Heart left ventricle (tissue), 16 donors: ENCODE measurements at regions of chr2 and their contacts with region 1.

Region 1: GRCh38 chr2:46296840-46297545 is at the start of gene EPAS1:
- DNase-seq: peak; percentile 97 to 98 (median 98)
- ATAC-seq: peak; percentile 80 to 92 (median 85)
- H3K4me3 ChIP-seq: peak within 1 kb of the TSS; percentile 76 to 99 (median 92)
- H3K27ac ChIP-seq: peak within 1 kb of the TSS; percentile 92 to 100 (median 96)
- H3K4me1 ChIP-seq: peaks cover 0 to 42% (median 18%) of the 10 kb centered on the region in 12 donors
- H3K27me3 ChIP-seq: peaks cover 0 to 13% (median 0%) of the 10 kb centered on the region in 9 donors
- CTCF ChIP-seq: no peak
- POLR2A ChIP-seq: peak; percentile 61 to 98
- total RNA-seq, gene EPAS1: 194 to 790 (median 216) TPM

Region 2: DNA sequence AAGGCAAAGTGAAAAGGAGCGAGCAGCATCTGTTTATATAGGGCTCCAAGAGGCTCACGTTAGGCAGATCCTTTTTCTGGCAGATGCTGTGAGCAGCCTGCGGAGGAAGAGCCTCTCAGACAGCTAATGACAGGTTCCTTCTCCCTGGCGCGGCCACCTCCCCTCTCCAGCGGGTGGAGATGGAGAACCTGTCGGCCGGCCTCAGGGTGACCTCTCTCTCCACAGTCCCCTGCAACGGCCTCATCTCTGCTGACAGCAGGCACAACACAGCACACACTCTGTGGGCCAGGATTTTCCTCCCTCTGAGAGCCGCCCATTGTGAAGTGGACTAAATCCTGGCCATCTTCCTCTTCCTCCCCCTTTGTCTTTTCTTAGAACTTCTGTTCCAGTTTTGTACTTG is 525.7 kb before region 1 on chr2:
- intact Hi-C with region 1: no loop called
- DNase-seq: peak; percentile 76 to 87 (median 81)
- ATAC-seq: peak; percentile 93 to 94 (median 94)
- H3K4me3 ChIP-seq: peak overlapping the region in 8 of 12 donors; percentile 20 to 43 (median 34)
- H3K27ac ChIP-seq: peak overlapping the region; percentile 55 to 81 (median 76)
- H3K4me1 ChIP-seq: peaks cover 0 to 73% (median 31%) of the 10 kb centered on the region in 12 donors
- H3K27me3 ChIP-seq: no peaks in the 10 kb centered on the region
- CTCF ChIP-seq: peak in 2 of 12 donors; percentile 10 to 12
- POLR2A ChIP-seq: no peak

Region 3: GRCh38 chr2:46010925-46011490 is 286.0 kb before region 1 on chr2:
- intact Hi-C with region 1: loop called in 6 of 10 experiments (anchors 2 to 10 kb)
- DNase-seq: no peak
- ATAC-seq: peak in 3 of 4 donors; percentile 50 to 68 (median 54)
- H3K4me3 ChIP-seq: no peak overlapping the region
- H3K27ac ChIP-seq: no peak overlapping the region
- H3K4me1 ChIP-seq: peaks cover 0 to 27% (median 12%) of the 10 kb centered on the region in 12 donors
- H3K27me3 ChIP-seq: no peaks in the 10 kb centered on the region
- CTCF ChIP-seq: peak; percentile 44 to 81 (median 72)
- POLR2A ChIP-seq: no peak

Region 4: GRCh38 chr2:46082521-46083485 is 214.2 kb before region 1 on chr2:
- intact Hi-C with region 1: no loop called
- DNase-seq: peak; percentile 75 to 89 (median 79)
- ATAC-seq: peak in 3 of 4 donors; percentile 77 to 94 (median 91)
- H3K4me3 ChIP-seq: no peak overlapping the region
- H3K27ac ChIP-seq: peak overlapping the region in 8 of 12 donors; percentile 23 to 89 (median 56)
- H3K4me1 ChIP-seq: peaks cover 0 to 44% (median 2%) of the 10 kb centered on the region in 12 donors
- H3K27me3 ChIP-seq: no peaks in the 10 kb centered on the region
- CTCF ChIP-seq: no peak
- POLR2A ChIP-seq: no peak

Region 5: GRCh38 chr2:46097714-46098480 is 199.1 kb before region 1 on chr2:
- intact Hi-C with region 1: loop called in 1 of 10 experiments (anchors 10 kb)
- DNase-seq: peak in 4 of 5 donors; percentile 65 to 89 (median 78)
- ATAC-seq: peak; percentile 86 to 96 (median 92)
- H3K4me3 ChIP-seq: no peak overlapping the region
- H3K27ac ChIP-seq: peak overlapping the region; percentile 13 to 88 (median 80)
- H3K4me1 ChIP-seq: peaks cover 0 to 42% (median 19%) of the 10 kb centered on the region in 12 donors
- H3K27me3 ChIP-seq: no peaks in the 10 kb centered on the region
- CTCF ChIP-seq: no peak
- POLR2A ChIP-seq: no peak

Region 6: DNA sequence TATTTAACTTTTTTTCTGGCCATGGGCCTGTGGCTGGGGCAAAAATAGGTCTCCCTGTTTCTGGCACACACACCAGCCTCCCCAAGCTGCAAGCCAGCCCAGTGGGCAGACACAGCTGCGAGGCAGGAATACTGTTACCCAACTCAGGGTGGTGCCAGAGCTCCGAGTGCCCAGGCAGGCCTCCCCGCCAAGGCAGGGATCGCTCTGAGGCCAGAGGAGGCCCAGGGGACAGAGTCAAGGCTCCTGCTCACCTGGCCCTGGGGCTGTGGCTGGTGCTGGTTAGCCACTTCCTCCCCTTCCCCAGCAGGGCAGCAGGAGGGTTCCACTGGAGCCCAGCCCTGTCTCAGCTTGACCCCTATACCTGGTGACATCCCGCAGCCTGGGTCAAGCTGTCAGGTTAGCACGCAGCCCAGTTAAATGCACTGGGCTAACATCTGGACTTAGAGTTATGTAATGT is 66.8 kb before region 1 on chr2:
- intact Hi-C with region 1: loop called in 2 of 10 experiments (anchors 5 kb)
- DNase-seq: peak in 4 of 5 donors; percentile 35 to 69 (median 61)
- ATAC-seq: peak; percentile 62 to 92 (median 88)
- H3K4me3 ChIP-seq: no peak overlapping the region
- H3K27ac ChIP-seq: peak overlapping the region in 8 of 12 donors; percentile 3 to 67 (median 42)
- H3K4me1 ChIP-seq: peaks cover 0 to 32% (median 14%) of the 10 kb centered on the region in 12 donors
- H3K27me3 ChIP-seq: no peaks in the 10 kb centered on the region
- CTCF ChIP-seq: peak; percentile 16 to 56 (median 39)
- POLR2A ChIP-seq: no peak

Region 7: DNA sequence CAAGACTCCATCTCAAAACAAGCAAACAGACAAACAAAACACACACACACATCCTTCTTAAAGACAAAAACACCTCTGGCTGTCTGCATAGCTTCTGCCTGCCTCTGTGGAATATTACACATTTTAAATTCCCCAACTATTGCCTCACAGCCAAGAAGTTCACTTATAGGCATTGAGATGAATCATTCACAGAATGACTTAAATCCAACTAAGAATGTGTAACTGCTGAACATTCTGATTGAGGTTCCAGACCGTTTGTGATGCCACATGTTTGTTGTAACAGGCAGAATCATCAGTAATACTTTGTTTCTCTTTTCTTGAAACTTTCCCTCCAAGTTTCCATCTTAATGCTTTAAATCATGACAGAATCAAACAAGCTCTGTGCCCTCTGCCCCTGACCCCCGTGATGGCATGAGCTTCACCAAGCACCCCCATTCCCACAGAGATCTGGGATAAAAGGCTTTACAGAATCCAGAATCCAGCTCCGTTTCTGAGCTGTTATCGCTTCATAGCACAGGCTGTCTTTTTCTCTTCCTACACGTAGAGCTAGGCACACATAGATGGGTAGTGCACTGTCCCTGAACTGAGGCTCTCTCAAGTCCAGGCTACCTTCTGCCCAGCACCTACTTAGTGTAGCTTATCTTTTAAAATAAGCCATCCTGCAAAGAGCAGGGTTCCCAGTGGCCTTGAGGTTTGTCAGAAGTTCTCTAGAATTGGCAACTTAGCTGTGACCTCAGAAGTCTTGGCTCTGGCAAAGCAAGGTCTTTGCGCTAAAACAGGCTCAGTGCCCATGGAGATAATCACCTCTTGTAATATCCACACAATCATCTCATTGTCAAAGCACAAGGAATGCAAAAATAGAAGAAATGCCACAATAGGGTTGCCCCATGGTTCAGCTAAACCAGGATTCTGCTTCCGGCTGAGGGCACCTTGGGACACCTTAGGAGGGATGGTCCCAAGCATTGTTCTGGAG is 33.1 kb after region 1 on chr2:
- intact Hi-C with region 1: loop called in 5 of 10 experiments (anchors 5 kb)
- DNase-seq: no peak
- ATAC-seq: peak in 1 of 4 donors; percentile 14
- H3K4me3 ChIP-seq: peak overlapping the region in 2 of 12 donors; percentile 9 to 11
- H3K27ac ChIP-seq: peak overlapping the region in 11 of 12 donors; percentile 39 to 90 (median 69)
- H3K4me1 ChIP-seq: peaks cover 31 to 100% (median 97%) of the 10 kb centered on the region in 12 donors
- H3K27me3 ChIP-seq: no peaks in the 10 kb centered on the region
- CTCF ChIP-seq: no peak
- POLR2A ChIP-seq: no peak

Region 8: DNA sequence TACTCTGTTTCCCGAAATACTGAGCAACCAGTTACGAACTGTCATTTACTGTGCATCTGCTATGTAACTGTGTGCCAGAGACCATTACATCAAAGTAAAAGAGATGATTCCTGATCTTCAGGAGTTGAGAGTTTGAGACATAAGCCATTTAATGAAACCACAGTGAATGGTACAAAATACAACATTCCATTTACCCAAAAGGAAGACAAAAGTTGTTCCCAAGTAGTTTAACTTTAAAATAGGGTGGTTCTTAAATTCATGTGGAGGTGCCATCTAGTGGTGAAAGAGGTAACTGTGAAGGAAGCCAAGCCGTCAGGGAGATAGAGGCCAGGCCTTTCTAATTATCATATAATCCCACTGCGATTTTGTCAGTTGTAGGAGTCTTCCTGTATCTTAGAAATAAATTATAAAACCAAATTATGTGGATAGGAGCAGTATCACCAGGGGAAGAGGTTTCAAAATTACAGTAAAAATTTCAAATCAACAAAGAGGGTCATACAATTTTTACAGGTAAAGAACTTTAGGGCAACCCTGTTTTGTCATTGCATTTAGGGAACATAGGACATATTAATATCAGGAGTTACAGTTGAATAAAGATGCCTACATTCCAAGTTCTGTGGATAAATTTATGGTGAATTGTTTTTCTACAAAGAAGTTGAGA is 67.9 kb after region 1 on chr2:
- intact Hi-C with region 1: loop called in 2 of 10 experiments (anchors 1 to 5 kb)
- DNase-seq: peak in 1 of 5 donors; percentile 39
- ATAC-seq: peak; percentile 15 to 58 (median 39)
- H3K4me3 ChIP-seq: no peak overlapping the region
- H3K27ac ChIP-seq: peak overlapping the region in 3 of 12 donors; percentile 15 to 77 (median 35)
- H3K4me1 ChIP-seq: peaks cover 0 to 56% (median 18%) of the 10 kb centered on the region in 12 donors
- H3K27me3 ChIP-seq: no peaks in the 10 kb centered on the region
- CTCF ChIP-seq: peak; percentile 72 to 92 (median 87)
- POLR2A ChIP-seq: no peak